Psoas muscle (tissue), 8 donors: ENCODE measurements at regions of chr20 and their contacts with region 1.

Region 1: GRCh38 chr20:25195014-25195961 is at the start of gene ENTPD6:
- DNase-seq: peak; percentile 94 to 96
- ATAC-seq: peak; percentile 97 to 98 (median 98)
- H3K4me3 ChIP-seq: peak within 1 kb of the TSS; percentile 96
- H3K27ac ChIP-seq: peak within 1 kb of the TSS; percentile 85
- H3K4me1 ChIP-seq: peaks cover 27% of the 10 kb centered on the region
- H3K27me3 ChIP-seq: no peaks in the 10 kb centered on the region
- CTCF ChIP-seq: no peak
- total RNA-seq, gene ENTPD6: 28.7 to 42.1 (median 34.6) TPM

Region 2: DNA sequence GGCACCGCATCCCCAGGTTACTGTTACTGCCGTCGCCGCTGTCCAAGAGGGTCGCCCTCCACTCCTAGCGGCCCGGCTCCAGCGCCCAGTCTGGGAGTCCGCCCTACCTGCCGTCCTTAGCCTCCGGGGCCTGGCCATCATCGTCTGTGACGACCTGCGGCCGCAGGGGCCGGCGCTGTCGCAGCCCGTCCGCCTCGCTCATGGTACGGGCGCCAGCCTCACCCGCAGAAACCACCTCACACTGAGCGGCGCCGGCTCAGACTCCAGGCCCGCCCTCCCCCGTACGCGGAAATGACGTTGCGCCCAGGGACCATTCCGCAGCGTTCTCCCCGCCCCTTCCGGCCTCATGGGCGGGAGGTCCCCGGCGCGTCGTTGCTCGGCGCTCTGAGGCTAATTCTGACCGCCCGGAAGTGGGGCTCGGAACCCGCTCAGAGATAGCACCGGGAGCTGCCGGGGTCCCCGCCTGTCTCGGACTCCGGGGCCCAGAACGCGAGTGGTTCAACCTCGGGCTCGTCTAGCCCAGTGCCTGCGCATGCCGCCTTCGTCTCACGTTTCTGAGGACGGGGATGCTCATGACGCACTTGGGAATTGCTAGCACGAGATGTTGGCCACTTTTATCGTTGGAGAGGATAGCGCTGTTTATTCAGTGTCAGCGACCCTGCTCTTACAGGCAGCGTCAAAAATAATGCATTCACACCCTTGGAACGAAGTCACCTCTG is 202.6 kb before region 1 on chr20 and contains the start of gene APMAP:
- intact Hi-C with region 1: loop called (anchors 5 kb)
- DNase-seq: peak; percentile 98
- ATAC-seq: peak; percentile 94 to 98 (median 94)
- H3K4me3 ChIP-seq: peak within 1 kb of the TSS; percentile 82
- H3K27ac ChIP-seq: peak within 1 kb of the TSS; percentile 90
- H3K4me1 ChIP-seq: peaks cover 23% of the 10 kb centered on the region
- H3K27me3 ChIP-seq: no peaks in the 10 kb centered on the region
- CTCF ChIP-seq: no peak
- total RNA-seq, gene APMAP: 19.9 to 44.5 (median 24.2) TPM

Region 3: DNA sequence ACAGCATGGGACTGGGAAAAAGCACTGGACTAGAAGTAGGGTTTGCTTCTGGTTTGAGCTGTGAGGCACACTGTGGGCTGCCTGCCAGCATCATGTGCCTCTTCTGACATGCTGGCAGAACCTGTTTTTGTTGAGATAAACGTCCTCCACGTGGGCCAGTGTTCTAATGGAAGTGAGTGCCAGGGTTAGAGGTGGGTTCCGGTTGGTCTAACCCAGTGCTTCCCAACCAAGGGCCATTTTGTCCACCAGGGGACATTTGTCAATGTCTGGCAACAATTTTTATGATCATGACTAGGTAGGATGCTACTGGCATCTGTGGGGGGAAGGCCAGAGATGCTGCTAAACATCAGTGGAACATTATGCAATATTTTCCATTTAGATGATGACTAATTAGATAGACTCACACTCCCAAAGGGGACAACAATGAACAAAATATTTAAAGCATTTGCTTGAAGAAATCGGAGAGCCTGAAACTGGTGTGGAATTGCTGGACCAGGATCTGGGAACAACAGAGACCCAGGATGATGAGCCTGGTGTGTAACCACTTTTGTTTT is 194.9 kb before region 1 on chr20:
- intact Hi-C with region 1: loop called in 1 of 2 experiments (anchors 5 kb)
- DNase-seq: peak; percentile 75 to 80
- ATAC-seq: peak; percentile 77 to 88 (median 87)
- H3K4me3 ChIP-seq: no peak overlapping the region
- H3K27ac ChIP-seq: peak overlapping the region; percentile 54
- H3K4me1 ChIP-seq: peaks cover 23% of the 10 kb centered on the region
- H3K27me3 ChIP-seq: no peaks in the 10 kb centered on the region
- CTCF ChIP-seq: peak; percentile 22

Region 4: DNA sequence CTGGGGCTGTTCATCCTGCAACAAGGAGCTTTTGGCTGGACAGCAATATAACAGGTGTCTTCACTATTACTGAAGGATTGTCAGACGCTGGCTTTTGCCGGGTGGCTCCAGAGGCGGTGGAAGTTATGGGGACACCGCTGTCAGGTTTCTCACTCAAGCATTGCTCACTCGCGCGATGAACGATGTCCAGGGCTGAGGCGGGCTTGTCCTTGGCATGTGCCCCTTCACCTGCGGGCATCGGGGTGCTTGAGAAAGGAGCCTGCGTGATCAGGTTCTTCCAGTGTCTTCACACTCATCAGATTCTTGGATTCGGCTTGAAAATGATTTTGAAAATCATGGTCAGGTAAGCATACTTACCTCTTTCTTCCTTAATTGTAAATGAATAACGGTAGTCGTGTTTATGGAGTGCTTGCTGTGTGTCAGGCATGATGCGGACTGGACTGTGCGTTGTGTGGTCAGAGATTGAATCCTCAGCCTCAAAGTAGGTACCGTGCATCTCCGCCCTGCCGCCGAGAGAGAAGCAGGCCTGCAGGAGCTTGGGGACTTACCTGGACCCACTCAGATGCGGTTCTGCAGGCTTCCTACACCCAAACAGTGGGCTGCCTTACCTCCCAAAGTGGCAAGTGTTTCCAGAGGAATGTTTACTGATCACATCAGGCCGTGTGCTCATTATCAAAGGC is 34.3 kb after region 1 on chr20:
- intact Hi-C with region 1: loop called in 1 of 2 experiments (anchors 2 kb)
- DNase-seq: no peak
- ATAC-seq: no peak
- H3K4me3 ChIP-seq: no peak overlapping the region
- H3K27ac ChIP-seq: no peak overlapping the region
- H3K4me1 ChIP-seq: peaks cover 21% of the 10 kb centered on the region
- H3K27me3 ChIP-seq: no peaks in the 10 kb centered on the region
- CTCF ChIP-seq: no peak

Region 5: GRCh38 chr20:25247956-25248785 is 52.9 kb after region 1 on chr20 and contains the start of gene PYGB:
- intact Hi-C with region 1: loop called (anchors 5 kb)
- DNase-seq: peak; percentile 71 to 86
- ATAC-seq: peak; percentile 92 to 96 (median 94)
- H3K4me3 ChIP-seq: peak within 1 kb of the TSS; percentile 75
- H3K27ac ChIP-seq: peak within 1 kb of the TSS; percentile 90
- H3K4me1 ChIP-seq: peaks cover 23% of the 10 kb centered on the region
- H3K27me3 ChIP-seq: no peaks in the 10 kb centered on the region
- CTCF ChIP-seq: no peak
- total RNA-seq, gene PYGB: 7.8 to 22.3 (median 10.6) TPM

Region 6: GRCh38 chr20:25390538-25391528 is 195.5 kb after region 1 on chr20 and contains the start of gene ABHD12:
- intact Hi-C with region 1: loop called (anchors 5 to 10 kb)
- DNase-seq: peak; percentile 97 to 98
- ATAC-seq: peak; percentile 99
- H3K4me3 ChIP-seq: peak within 1 kb of the TSS; percentile 78
- H3K27ac ChIP-seq: peak within 1 kb of the TSS; percentile 85
- H3K4me1 ChIP-seq: peaks cover 3% of the 10 kb centered on the region
- H3K27me3 ChIP-seq: no peaks in the 10 kb centered on the region
- CTCF ChIP-seq: no peak
- total RNA-seq, gene ABHD12: 7.9 to 10.9 (median 8.8) TPM

Region 7: GRCh38 chr20:25399037-25399430 is 203.7 kb after region 1 on chr20:
- intact Hi-C with region 1: loop called (anchors 5 to 10 kb)
- DNase-seq: no peak
- ATAC-seq: peak; percentile 64 to 92 (median 84)
- H3K4me3 ChIP-seq: no peak overlapping the region
- H3K27ac ChIP-seq: no peak overlapping the region
- H3K4me1 ChIP-seq: no peaks in the 10 kb centered on the region
- H3K27me3 ChIP-seq: no peaks in the 10 kb centered on the region
- CTCF ChIP-seq: peak; percentile 61